Endothelial cell of umbilical vein (primary cell): ENCODE measurements at regions of chr14 and their contacts with region 1.

Region 1: DNA sequence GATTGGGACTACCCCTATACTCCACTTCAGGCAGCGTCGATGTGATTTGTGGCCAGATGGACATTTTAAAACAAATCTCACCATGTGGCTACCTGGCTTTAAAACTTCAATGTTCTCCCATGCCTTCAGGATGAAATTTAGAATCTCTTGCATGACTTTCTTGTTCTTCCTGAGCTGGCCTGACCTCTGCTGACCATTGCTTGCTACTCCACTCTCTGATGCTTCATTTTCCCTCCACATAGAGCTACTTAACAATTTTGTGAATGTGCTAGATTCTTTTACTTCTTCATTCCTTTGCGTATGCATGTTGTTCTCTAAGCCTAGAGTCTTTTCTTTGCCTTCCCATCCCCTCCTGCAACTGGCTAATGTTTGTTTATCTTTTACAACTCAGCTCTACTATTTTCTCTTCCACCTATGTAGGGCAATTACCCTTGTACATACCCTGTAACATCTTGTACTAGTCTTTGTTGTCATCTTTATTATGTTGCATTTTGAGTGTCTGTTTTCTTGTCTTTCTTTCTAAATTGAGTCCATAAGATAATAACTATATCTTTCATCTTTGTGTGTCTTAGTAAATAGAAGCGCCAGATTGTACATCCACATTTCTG is 41.2 kb downstream of the YLPM1 start:
- DNase-seq: peak; percentile 76
- H3K4me3 ChIP-seq: no peak overlapping the region
- H3K27ac ChIP-seq: no peak overlapping the region
- H3K4me1 ChIP-seq: no peaks in the 10 kb centered on the region
- H3K27me3 ChIP-seq: no peaks in the 10 kb centered on the region
- CTCF ChIP-seq: peak; percentile 66 to 68
- POLR2A ChIP-seq: no peak

Region 2: DNA sequence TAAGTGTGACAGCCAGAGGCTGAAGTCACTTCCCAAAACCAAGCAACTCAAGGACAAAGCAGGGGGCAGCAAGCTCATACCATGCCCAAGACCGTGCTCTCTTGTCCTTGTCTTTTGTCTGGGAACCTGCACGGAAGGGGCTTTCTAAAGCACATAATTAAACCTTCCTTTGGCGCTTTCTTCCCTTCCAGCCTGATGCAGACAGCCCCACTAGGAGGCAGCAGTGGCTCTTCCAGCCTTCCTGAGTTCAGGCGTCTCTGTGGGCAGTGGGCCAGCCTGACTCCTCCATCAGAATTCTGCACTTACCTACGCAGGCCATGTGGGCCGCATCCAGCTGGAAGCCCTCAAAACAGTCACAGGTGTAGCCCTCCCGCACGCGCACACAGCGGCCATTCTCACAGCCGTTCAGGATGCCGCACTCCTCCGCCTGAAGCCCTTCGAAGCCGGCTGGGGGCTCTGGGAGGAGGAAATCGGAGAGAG is 303.1 kb before region 1 on chr14:
- CTCF ChIA-PET with region 1: no interaction called
- POLR2A ChIA-PET with region 1: no interaction called
- dilution Hi-C with region 1: no loop called
- intact Hi-C with region 1: loop called (anchors 5 kb)
- DNase-seq: peak; percentile 62
- H3K4me3 ChIP-seq: no peak overlapping the region
- H3K27ac ChIP-seq: no peak overlapping the region
- H3K4me1 ChIP-seq: no peaks in the 10 kb centered on the region
- H3K27me3 ChIP-seq: no peaks in the 10 kb centered on the region
- CTCF ChIP-seq: peak; percentile 60 to 74
- POLR2A ChIP-seq: no peak

Region 3: GRCh38 chr14:74671789-74672188 is 132.5 kb before region 1 on chr14:
- CTCF ChIA-PET with region 1: interaction called, 7 read pairs
- POLR2A ChIA-PET with region 1: no interaction called
- dilution Hi-C with region 1: no loop called
- intact Hi-C with region 1: loop called (anchors 5 kb)
- DNase-seq: peak; percentile 85
- H3K4me3 ChIP-seq: no peak overlapping the region
- H3K27ac ChIP-seq: peak overlapping the region; percentile 89
- H3K4me1 ChIP-seq: peaks cover 43% of the 10 kb centered on the region
- H3K27me3 ChIP-seq: no peaks in the 10 kb centered on the region
- CTCF ChIP-seq: no peak
- POLR2A ChIP-seq: no peak

Region 4: DNA sequence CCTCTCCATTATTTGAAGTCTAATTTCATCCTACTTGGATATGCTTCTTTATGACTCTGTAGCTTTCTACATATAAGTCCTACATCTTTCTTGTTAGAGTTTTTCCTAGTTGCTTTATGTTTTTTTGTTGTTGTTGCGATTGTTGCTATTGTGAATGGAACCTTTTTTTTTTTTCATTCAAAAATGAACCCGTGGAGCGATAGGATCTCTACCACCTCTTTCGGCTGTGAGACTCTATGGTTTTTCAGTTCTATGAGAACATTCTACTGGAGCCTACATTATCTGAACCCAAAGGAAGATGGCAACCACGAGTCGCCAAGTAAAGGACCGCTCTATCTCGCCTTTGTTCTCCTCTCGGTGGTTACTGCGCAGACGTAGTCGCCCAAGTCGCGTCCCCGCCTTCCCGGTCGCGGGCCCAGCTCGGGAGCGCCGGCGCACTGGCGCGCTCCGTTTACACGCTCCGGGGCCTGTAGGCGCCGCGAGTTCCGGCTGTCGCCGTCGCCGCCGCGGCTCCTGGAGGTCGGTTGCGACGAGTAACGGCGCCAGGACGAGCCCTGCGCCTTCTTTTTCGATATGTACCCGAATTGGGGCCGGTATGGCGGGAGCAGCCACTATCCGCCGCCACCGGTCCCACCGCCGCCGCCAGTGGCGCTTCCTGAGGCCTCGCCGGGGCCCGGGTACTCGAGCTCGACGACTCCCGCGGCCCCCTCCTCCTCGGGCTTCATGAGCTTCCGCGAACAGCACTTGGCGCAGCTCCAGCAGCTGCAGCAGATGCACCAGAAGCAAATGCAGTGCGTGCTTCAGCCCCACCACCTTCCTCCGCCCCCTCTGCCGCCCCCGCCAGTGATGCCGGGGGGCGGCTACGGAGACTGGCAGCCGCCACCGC is 41.2 kb before region 1 on chr14 and contains the start of gene YLPM1:
- CTCF ChIA-PET with region 1: interaction called, 15 read pairs
- POLR2A ChIA-PET with region 1: interaction called, 4 read pairs
- dilution Hi-C with region 1: no loop called
- intact Hi-C with region 1: no loop called
- DNase-seq: peak; percentile 97
- H3K4me3 ChIP-seq: peak within 1 kb of the TSS; percentile 59 to 92 (median 90)
- H3K27ac ChIP-seq: peak within 1 kb of the TSS; percentile 86
- H3K4me1 ChIP-seq: peaks cover 25% of the 10 kb centered on the region
- H3K27me3 ChIP-seq: no peaks in the 10 kb centered on the region
- CTCF ChIP-seq: peak; percentile 42 to 62
- POLR2A ChIP-seq: peak; percentile 86
- total RNA-seq, gene YLPM1: 81.0 and 85.7 TPM in 2 replicates